A673 (cell line): ENCODE measurements at regions of chr1 and their contacts with region 1.

Region 1: DNA sequence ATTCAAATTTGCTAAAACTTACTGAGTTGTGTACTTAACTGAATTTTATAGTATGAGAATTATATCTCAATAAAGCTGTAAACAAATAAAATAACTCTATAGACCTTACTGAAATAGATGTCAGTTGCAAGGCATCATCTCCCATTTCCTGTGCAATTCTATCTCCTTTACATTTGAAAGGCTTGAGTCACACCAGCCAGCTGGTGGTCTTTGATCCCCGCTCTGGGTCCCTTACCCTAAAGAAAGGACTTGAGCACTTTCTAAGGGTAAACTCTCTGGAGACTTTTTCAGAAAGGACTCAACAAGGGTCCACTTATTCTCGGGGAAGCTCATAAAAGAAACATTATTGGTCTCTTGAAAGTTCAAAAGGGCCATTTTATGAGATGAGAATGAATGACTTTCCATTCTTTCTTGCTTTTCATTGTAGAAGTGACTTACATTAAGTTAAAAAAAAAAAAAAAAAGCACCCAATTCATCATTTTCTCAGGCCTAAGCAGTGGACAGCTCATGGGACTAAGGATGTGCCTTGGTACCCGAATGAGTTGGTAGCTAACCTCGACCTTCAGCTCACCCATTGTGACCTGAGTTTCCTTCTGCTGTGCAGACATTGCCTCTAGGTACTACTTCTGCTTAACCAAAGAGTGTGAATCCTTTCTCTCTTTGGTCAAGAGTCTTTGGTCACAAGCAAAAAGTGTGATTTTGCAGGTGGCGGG is 147.0 kb upstream of the COA6 start:
- DNase-seq: peak; percentile 74
- H3K4me3 ChIP-seq: no peak overlapping the region
- H3K27ac ChIP-seq: no peak overlapping the region
- H3K4me1 ChIP-seq: peaks cover 32% of the 10 kb centered on the region
- H3K27me3 ChIP-seq: no peaks in the 10 kb centered on the region
- CTCF ChIP-seq: no peak

Region 2: DNA sequence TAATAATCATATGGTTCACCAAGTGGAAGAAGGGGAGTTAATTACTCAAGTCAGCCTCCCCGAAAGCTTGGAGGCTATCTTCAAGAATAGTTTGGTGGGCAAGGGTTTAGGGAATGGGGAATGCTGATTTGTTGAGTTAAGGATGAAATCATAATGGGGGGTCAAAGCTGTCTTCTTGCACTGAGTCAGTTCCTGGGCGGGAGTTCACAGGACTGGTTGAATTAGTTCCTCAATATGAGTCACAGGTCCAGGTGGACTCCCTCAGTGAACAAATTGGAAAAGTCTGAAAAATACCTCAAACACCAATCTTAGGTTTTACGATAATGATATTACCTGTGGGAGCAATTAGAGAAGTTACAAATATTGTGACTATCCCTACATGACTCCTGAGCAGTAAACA is 31.8 kb after region 1 on chr1:
- CTCF ChIA-PET with region 1: no interaction called
- POLR2A ChIA-PET with region 1: interaction called, 23 read pairs
- intact Hi-C with region 1: no loop called
- DNase-seq: no peak
- H3K4me3 ChIP-seq: no peak overlapping the region
- H3K27ac ChIP-seq: no peak overlapping the region
- H3K4me1 ChIP-seq: peaks cover 21% of the 10 kb centered on the region
- H3K27me3 ChIP-seq: no peaks in the 10 kb centered on the region
- CTCF ChIP-seq: no peak

Region 3: GRCh38 chr1:234515821-234516241 is 289.6 kb after region 1 on chr1:
- CTCF ChIA-PET with region 1: no interaction called
- POLR2A ChIA-PET with region 1: no interaction called
- intact Hi-C with region 1: no loop called
- DNase-seq: peak; percentile 93
- H3K4me3 ChIP-seq: no peak overlapping the region
- H3K27ac ChIP-seq: peak overlapping the region; percentile 93
- H3K4me1 ChIP-seq: peaks cover 78% of the 10 kb centered on the region
- H3K27me3 ChIP-seq: no peaks in the 10 kb centered on the region
- CTCF ChIP-seq: no peak